ENCODE measurements at regions of chr5 and their contacts with region 1.

Region 1: GRCh38 chr5:176647030-176647866 is at the start of gene TSPAN17:
- DNase-seq: peak; percentile 98 to 100
- H3K4me3 ChIP-seq: peak within 1 kb of the TSS; percentile 74 to 75
- H3K27ac ChIP-seq: peak within 1 kb of the TSS; percentile 76 to 79
- H3K4me1 ChIP-seq: peaks cover 3 to 10% of the 10 kb centered on the region in 2 donors
- H3K27me3 ChIP-seq: no peaks in the 10 kb centered on the region
- CTCF ChIP-seq: peak in 1 of 3 experiments; percentile 42
- total RNA-seq, gene TSPAN17: 32.7 TPM

Region 2: DNA sequence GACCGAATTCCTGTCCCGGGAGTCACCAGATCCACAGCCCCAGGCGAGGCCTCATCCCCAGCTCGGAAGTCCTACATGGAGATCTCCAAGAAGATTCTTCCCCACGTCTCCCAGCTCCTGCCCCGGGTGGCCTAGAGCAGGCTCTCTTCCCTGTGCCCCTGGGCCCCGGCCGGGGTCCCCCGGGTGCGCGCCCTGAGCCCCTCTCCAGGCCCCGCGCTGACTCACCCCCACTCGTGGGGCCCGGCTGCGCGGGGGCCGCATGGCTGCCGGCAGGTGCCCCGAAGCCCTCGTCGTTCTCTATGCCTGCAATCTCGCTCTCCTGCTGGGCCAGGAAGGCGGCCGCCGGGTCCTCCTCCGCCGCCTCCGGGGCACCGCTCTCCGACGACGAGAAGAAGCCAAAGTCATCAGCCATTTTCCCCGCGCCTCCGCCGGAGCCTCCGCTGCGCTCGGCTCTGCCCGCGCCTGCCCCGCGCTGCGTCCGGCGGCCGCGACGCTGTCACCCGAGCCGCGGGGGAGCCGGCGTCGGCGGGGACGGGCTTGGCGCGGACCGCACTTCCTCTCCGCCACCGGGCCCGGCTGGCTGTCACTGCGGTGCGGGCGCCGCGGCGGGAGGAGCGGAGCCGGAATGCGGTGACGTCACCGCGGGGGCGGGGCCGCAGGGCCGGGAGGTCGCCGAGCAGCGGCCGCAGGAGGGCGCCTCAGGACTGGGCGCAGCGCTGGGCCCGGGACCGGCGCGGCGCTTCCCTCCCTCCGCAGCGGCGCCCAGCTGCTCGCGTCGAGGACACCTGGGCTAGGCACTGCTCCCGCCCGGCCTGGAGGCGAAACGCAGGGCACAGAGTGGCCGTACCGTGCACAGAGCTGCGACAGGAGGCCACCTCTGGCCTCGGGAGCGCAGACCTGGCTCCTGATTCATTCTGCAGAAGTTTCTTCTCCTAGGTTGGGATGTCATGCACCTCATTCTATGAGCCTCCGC is 231.0 kb before region 1 on chr5 and contains the start of gene CLTB:
- intact Hi-C with region 1: loop called (anchors 2 kb)
- DNase-seq: peak; percentile 49 to 94
- H3K4me3 ChIP-seq: peak within 1 kb of the TSS; percentile 64 to 71
- H3K27ac ChIP-seq: peak within 1 kb of the TSS; percentile 80 to 92
- H3K4me1 ChIP-seq: peaks cover 0 to 32% of the 10 kb centered on the region in 2 donors
- H3K27me3 ChIP-seq: no peaks in the 10 kb centered on the region
- CTCF ChIP-seq: peak; percentile 23 to 97 (median 54)
- total RNA-seq, gene CLTB: 189 TPM

Region 3: GRCh38 chr5:176447982-176448608 is 199.2 kb before region 1 on chr5 and contains the start of gene FAF2:
- intact Hi-C with region 1: loop called (anchors 10 kb)
- DNase-seq: peak; percentile 87 to 98
- H3K4me3 ChIP-seq: peak within 1 kb of the TSS; percentile 88 to 94
- H3K27ac ChIP-seq: peak within 1 kb of the TSS; percentile 91 to 92
- H3K4me1 ChIP-seq: peaks cover 6 to 17% of the 10 kb centered on the region in 2 donors
- H3K27me3 ChIP-seq: no peaks in the 10 kb centered on the region
- CTCF ChIP-seq: peak; percentile 97 to 98 (median 97)
- total RNA-seq, gene FAF2: 18.7 TPM

Region 4: DNA sequence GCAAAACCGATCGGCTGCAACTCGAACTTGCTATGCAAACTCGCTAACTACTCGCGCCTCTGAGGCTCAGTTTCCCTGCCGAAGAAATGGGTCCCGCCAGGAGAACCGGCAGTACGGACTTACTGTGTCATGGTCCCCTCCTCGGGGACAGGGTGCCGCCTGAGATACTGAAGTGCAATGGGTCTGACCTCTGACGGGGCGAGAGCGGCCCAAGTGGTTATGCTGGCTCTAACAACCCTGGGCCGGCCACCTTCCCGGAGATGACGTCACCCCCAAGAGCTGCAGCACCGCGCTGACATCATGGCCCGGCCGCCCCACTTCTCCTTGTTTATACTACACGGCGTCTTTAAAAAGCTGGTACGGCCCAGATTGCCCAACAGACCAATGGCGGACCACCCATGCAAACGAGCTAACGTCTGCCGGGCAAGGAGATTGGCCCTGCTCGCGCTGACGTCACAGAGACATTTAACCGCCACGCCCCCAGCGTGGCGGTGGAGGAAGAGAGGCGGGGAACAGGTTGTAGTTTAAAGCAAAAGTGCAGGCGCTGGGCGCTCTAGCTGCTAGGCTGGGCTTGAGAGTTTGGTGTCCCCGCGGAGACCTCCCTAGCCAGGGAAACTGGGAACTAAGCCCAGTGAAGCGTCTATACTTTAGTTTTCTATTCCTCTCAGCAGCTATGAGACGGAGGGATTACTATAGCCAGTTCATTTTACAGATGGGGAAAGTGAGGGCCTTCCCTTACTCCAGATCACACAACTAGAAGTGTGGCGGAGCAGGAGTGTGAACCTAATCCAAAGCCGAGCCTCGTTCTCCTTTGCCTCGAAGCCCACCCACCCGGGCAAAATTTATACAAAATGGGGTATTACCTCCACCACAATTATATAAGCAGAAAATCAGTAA is 109.4 kb before region 1 on chr5:
- intact Hi-C with region 1: loop called (anchors 1 kb)
- DNase-seq: peak; percentile 100
- H3K4me3 ChIP-seq: peak overlapping the region; percentile 76 to 85
- H3K27ac ChIP-seq: peak overlapping the region; percentile 91 to 97
- H3K4me1 ChIP-seq: peaks cover 10 to 42% of the 10 kb centered on the region in 2 donors
- H3K27me3 ChIP-seq: no peaks in the 10 kb centered on the region
- CTCF ChIP-seq: no peak

Region 5: DNA sequence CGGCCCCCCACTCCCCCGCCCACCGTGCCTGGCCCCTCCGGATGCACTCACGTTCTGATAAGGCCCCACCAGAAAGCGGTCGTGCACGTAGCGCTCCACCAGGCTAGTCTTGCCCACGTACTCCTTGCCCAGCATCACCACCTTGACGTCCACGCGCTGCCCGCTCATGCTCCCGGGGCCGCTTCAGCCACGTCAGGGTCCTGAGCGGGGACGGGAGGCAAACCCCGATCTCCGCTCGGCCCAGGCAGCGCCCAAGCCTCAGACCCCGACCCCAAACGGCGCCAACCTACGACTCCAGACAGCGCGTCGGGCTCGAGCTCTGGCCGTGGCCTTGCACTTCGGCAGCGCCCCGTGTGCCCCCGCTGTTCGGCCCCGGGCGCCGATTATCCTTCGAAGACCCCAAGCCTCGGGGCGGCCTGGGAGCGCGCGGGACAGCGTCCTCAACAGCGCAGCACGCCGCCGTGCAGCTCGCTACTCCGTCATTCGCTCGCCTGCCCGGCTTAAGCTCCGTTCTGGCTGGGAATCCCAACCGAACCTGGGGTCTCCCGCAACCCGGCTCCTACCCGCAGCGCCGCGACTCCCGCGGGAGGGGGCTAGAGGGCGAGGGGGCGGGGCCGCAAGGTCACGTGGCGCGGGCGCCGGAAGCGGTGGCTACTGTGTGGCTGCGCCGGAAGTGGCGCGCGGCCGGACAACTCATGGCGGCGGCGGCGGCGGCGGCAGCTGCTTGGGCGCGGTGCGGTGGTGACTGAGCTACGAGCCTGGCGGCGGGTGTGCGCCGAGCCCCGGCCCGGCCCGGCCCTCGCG is 656.1 kb after region 1 on chr5 and contains the starts of genes PRELID1 and RAB24:
- intact Hi-C with region 1: loop called (anchors 10 kb)
- DNase-seq: peak in 1 of 2 donors; percentile 94
- H3K4me3 ChIP-seq: peak within 1 kb of the TSS; percentile 72 to 90
- H3K27ac ChIP-seq: peak within 1 kb of the TSS; percentile 80 to 88
- H3K4me1 ChIP-seq: peaks cover 3 to 31% of the 10 kb centered on the region in 2 donors
- H3K27me3 ChIP-seq: no peaks in the 10 kb centered on the region
- CTCF ChIP-seq: peak in 2 of 3 experiments; percentile 30 to 43
- total RNA-seq, gene PRELID1: 376 TPM
- total RNA-seq, gene RAB24: 68.8 TPM

Measured in ascending aorta (tissue), 2 donors.